Activated CD8-positive, alpha-beta T cell treated with anti-CD3 and anti-CD28 coated beads for 36 hours (primary cell): ENCODE measurements at regions of chr3 and their contacts with region 1.

Region 1: DNA sequence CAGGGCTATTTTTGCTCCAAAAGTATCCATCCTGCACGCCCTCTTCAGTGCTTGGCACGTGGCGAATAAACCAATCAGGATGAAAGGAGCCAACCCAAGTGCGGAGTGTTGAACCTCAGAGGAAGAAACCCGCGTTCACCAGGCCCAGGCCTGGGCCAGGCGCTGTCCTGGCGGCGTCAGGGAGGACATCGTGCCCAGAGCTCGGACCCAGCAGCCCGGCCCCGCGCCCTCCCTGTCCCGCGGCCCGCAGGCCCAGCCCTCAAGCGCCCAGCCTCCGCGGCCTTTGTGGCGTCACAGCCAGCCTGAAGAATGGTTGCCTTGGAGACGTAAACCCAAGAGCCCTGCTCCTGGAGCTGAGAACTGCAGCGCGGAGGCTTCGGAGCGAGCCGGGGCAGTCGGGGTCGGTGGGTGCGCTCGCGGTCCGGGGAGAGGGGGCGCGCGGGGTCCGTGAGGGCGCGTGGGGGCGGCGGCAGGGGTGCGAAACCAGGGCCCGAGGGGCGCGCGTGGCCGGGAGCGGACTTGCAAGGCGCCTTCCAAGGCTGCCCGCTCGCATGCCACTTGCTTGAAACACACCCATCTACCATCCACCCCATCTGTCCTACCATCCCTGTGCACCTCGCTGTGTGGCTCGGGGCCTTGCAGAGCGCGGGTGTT is at the start of gene CFAP100:
- DNase-seq: no peak
- ATAC-seq: no peak
- H3K4me3 Mint-ChIP-seq: no peak within 1 kb of the TSS
- H3K27ac Mint-ChIP-seq: no peak within 1 kb of the TSS
- H3K4me1 Mint-ChIP-seq: peaks cover 5% of the 10 kb centered on the region
- H3K27me3 Mint-ChIP-seq: peaks cover 41% of the 10 kb centered on the region
- CTCF ChIP-seq: no peak
- total RNA-seq, gene CFAP100: not detected

Region 2: DNA sequence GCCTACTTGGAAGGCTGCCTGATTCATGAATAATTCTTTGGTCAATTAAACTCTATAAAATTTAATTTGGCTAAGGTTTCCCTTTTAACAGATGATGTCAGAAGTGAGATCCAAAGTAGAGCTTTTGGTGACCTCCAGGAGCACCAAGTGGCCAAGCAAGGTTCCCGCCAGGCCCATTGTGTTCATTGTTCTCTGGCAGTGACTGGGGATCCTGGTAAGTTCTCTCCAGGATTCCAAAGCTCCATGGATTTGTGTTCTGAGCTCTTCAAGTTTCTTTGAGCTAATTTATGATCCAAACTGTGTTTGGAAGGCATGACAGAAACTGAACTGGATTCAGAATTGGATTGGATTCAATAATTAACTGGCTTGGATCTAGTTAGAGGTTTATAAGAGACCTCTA is 142.3 kb before region 1 on chr3:
- CTCF ChIA-PET with region 1: no interaction called
- POLR2A ChIA-PET with region 1: no interaction called
- intact Hi-C with region 1: loop called (anchors 5 kb)
- DNase-seq: no peak
- ATAC-seq: no peak
- H3K4me3 Mint-ChIP-seq: no peak overlapping the region
- H3K27ac Mint-ChIP-seq: no peak overlapping the region
- H3K4me1 Mint-ChIP-seq: no peaks in the 10 kb centered on the region
- H3K27me3 Mint-ChIP-seq: peaks cover 4% of the 10 kb centered on the region
- CTCF ChIP-seq: no peak

Region 3: DNA sequence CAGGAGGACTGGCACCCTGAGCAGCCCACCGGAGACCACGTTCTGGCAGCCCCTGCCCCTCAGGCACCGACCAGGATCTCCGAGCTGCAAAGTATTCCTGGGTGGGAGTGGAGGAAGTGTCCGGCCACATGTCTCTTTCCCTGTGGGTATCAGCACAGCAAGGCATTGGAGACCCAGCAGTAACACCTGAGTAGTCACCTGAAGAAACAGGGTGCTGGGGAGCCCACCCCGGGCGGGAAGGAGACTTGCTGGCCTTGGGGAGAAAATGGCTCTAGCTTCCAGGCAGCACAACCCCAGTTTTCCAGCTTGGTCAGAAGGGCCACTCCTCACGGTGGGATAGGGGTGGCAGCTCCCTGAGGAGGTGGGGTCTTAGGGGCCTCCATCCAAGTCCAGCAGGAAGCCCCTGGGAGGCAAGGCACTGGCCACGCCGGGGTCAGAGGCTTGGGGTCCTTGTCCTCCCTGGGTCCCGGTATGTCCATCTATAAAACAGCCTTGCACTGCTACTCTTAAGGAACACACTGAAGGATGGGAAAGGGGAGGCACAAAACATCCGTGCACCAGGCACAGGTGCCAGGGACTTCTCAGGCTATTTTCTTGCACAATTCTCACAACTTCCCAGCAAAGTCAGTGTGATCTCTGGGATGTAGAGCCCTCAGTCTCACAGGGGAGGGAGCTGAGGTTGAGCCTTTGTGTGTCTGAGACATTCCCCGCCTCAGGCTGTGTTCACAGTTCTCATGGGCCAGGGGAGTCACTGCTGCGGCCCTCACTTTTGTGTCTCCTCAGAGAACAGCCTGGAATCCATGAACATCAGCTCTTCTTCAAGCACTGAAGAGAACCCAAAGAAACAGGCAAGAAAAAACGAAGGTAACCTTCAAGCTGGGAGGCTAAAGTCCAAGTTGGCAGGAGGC is 11.9 kb after region 1 on chr3:
- CTCF ChIA-PET with region 1: no interaction called
- POLR2A ChIA-PET with region 1: no interaction called
- intact Hi-C with region 1: no loop called
- DNase-seq: no peak
- ATAC-seq: no peak
- H3K4me3 Mint-ChIP-seq: no peak overlapping the region
- H3K27ac Mint-ChIP-seq: no peak overlapping the region
- H3K4me1 Mint-ChIP-seq: no peaks in the 10 kb centered on the region
- H3K27me3 Mint-ChIP-seq: peaks cover 13% of the 10 kb centered on the region
- CTCF ChIP-seq: no peak

Region 4: GRCh38 chr3:126715392-126715791 is 320.7 kb after region 1 on chr3:
- CTCF ChIA-PET with region 1: no interaction called
- POLR2A ChIA-PET with region 1: no interaction called
- intact Hi-C with region 1: no loop called
- DNase-seq: no peak
- ATAC-seq: no peak
- H3K4me3 Mint-ChIP-seq: no peak overlapping the region
- H3K27ac Mint-ChIP-seq: no peak overlapping the region
- H3K4me1 Mint-ChIP-seq: peaks cover 2% of the 10 kb centered on the region
- H3K27me3 Mint-ChIP-seq: no peaks in the 10 kb centered on the region
- CTCF ChIP-seq: no peak